MCF 10A (cell line): ENCODE measurements at regions of chr15 and their contacts with region 1.

Region 1: GRCh38 chr15:63402498-63403253 is 21.0 kb upstream of the CA12 start:
- DNase-seq: peak; percentile 58
- H3K4me3 Mint-ChIP-seq: no peak overlapping the region
- H3K27ac Mint-ChIP-seq: no peak overlapping the region
- H3K4me1 Mint-ChIP-seq: peaks cover 6% of the 10 kb centered on the region
- H3K27me3 Mint-ChIP-seq: no peaks in the 10 kb centered on the region
- CTCF ChIP-seq: peak; percentile 59

Region 2: DNA sequence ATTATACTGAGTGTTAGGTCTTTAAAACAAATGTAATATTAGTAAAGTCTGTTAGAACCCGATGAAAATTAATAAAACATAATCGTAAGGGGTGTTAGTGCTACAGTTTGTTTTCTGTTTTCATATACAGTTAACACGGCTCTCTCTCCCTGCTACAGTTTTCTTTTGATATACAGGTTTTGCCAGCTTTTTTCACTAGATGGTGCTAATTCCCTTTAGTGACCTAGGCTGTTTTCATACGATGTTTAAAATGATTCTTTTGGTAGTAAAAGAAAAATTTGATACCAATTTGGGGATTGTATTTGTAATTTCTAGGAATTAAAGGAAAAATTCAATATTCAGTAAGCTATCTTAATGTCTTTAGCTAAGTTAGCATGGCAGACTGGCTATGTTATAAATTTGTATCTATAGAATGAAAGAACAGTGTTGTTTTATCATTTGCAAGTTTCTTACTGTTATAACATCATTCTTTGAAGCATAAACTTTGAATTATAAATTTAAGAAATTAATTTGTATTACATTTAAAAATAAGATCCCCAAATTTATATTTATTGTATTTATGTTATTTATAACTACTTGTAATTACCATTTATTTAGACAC is 113.8 kb before region 1 on chr15:
- CTCF ChIA-PET with region 1: interaction called, 70 read pairs
- POLR2A ChIA-PET with region 1: interaction called, 11 read pairs
- intact Hi-C with region 1: loop called (anchors 1 kb)
- DNase-seq: peak; percentile 67
- H3K4me3 Mint-ChIP-seq: no peak overlapping the region
- H3K27ac Mint-ChIP-seq: no peak overlapping the region
- H3K4me1 Mint-ChIP-seq: no peaks in the 10 kb centered on the region
- H3K27me3 Mint-ChIP-seq: no peaks in the 10 kb centered on the region
- CTCF ChIP-seq: peak; percentile 61

Region 3: DNA sequence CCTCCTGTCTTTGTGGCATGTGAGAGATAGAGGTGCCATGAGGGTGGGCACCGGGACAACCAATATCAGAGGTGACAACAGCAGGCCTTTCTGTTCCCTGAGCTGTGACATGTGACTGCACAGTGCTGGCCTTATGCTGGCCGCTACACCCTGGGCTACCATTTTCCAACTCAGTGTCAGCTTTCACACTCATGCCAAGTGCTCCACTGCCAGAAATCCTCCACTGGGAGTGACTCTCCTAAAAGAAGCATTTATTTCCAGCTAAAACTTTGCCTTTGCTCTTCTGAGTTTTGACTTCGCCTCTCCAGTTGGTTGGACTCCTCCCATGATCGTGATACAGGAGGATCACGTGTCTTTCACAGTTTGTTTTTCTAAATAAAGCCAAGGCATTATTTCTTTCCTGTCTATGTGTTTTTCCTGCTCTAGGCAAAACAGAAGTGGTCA is 52.5 kb before region 1 on chr15:
- CTCF ChIA-PET with region 1: no interaction called
- POLR2A ChIA-PET with region 1: no interaction called
- intact Hi-C with region 1: no loop called
- DNase-seq: no peak
- H3K4me3 Mint-ChIP-seq: no peak overlapping the region
- H3K27ac Mint-ChIP-seq: no peak overlapping the region
- H3K4me1 Mint-ChIP-seq: peaks cover 30% of the 10 kb centered on the region
- H3K27me3 Mint-ChIP-seq: no peaks in the 10 kb centered on the region
- CTCF ChIP-seq: no peak

Region 4: DNA sequence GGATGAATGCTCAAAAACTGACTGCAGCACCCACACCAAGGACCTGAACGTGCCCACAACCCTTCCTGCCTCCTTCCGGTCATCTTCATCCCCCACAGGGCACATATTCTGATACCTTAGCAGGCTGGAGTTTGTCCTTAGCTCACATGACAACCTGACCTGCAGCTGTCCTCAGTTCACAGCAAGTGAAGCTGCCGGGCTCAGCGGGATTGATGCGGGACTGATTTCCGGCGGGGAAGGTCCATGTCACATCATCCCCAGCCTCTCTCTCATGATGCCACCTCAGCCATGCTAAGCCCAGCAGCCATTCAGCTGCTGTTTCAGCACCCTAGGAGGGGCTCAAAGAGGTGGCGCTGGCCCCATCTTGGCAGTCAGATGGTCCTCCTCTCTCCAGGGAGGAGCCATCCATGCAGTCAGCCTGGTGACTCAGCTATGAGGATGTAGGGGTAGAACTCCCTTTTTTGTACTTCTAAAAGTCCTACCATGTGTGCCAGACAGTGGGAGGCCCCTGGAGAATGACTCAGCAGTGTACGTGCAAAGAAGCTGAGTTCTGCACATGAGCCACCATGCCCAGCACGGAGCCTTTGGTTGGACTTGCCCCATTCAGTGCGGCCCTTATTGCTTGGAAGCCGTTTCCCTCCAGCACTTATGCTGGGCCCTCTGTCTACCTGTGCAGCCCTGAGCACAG is 30.5 kb before region 1 on chr15:
- CTCF ChIA-PET with region 1: interaction called, 3 read pairs
- POLR2A ChIA-PET with region 1: interaction called, 10 read pairs
- intact Hi-C with region 1: no loop called
- DNase-seq: peak; percentile 96
- H3K4me3 Mint-ChIP-seq: peak overlapping the region; percentile 65
- H3K27ac Mint-ChIP-seq: peak overlapping the region; percentile 95
- H3K4me1 Mint-ChIP-seq: peaks cover 54% of the 10 kb centered on the region
- H3K27me3 Mint-ChIP-seq: no peaks in the 10 kb centered on the region
- CTCF ChIP-seq: no peak

Region 5: GRCh38 chr15:63389902-63390670 is 12.6 kb before region 1 on chr15:
- CTCF ChIA-PET with region 1: interaction called, 11 read pairs
- POLR2A ChIA-PET with region 1: interaction called, 5 read pairs
- intact Hi-C with region 1: no loop called
- DNase-seq: peak; percentile 67
- H3K4me3 Mint-ChIP-seq: no peak overlapping the region
- H3K27ac Mint-ChIP-seq: no peak overlapping the region
- H3K4me1 Mint-ChIP-seq: no peaks in the 10 kb centered on the region
- H3K27me3 Mint-ChIP-seq: no peaks in the 10 kb centered on the region
- CTCF ChIP-seq: no peak

Region 6: DNA sequence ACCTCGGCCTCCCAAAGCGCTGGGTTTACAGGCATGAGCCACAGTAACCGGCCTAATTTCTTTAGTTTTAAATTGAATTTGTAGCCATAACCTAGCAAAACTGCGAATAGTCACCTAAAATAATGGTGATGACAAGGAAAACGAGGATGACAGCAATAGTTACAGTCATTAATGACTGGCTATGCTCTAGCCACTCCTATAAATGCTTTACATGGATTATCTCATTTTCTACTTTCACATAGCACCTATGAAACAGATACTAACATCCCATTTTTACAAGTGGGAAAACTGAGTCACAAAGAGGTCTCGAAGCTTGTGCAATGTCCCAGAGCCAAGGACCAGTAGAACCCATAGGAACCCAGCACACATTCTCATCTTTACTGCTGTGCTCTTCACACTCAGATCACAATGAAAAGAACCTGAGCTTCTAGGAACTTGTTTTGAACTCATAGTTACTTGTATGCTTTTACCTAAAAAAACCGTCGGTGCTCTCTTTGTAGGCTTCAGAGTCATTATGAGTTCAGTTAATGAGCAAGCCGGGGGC is 233.9 kb after region 1 on chr15:
- CTCF ChIA-PET with region 1: no interaction called
- POLR2A ChIA-PET with region 1: no interaction called
- intact Hi-C with region 1: no loop called
- DNase-seq: no peak
- H3K4me3 Mint-ChIP-seq: no peak overlapping the region
- H3K27ac Mint-ChIP-seq: no peak overlapping the region
- H3K4me1 Mint-ChIP-seq: no peaks in the 10 kb centered on the region
- H3K27me3 Mint-ChIP-seq: no peaks in the 10 kb centered on the region
- CTCF ChIP-seq: no peak